WTC11 (cell line): ENCODE measurements at regions of chr18 and their contacts with region 1.

Region 1: DNA sequence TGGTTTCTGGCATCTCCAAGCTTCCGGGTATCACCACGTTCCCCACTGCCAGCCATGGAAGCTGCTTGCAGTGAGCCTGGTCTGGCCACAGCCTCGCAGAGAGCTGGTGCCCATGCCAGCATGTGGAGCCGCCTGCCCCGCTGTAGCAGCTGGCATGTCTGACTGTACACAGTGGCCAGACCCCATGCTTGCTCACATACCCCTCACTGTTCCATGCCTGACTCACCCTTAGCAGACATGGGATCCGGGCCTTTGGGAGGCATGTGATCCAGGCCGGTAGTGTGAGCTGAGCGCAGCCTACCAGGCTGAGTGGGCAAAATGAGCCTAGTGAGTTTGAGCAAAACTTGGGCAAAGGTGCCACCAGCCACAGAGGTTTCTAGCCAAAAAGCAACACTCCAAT is 18.8 kb upstream of the RPRD1A start:
- DNase-seq: no peak
- ATAC-seq: no peak
- H3K4me3 Mint-ChIP-seq: no peak overlapping the region
- H3K27ac Mint-ChIP-seq: no peak overlapping the region
- H3K4me1 Mint-ChIP-seq: no peaks in the 10 kb centered on the region
- H3K27me3 Mint-ChIP-seq: no peaks in the 10 kb centered on the region
- CTCF ChIP-seq: no peak

Region 2: GRCh38 chr18:35311476-35311875 is 774.7 kb before region 1 on chr18:
- CTCF ChIA-PET with region 1: no interaction called
- POLR2A ChIA-PET with region 1: no interaction called
- DNase-seq: no peak
- ATAC-seq: no peak
- H3K4me3 Mint-ChIP-seq: no peak overlapping the region
- H3K27ac Mint-ChIP-seq: no peak overlapping the region
- H3K4me1 Mint-ChIP-seq: no peaks in the 10 kb centered on the region
- H3K27me3 Mint-ChIP-seq: peaks cover 12% of the 10 kb centered on the region
- CTCF ChIP-seq: no peak

Region 3: GRCh38 chr18:35939138-35939537 is 147.0 kb before region 1 on chr18:
- CTCF ChIA-PET with region 1: no interaction called
- POLR2A ChIA-PET with region 1: no interaction called
- DNase-seq: peak; percentile 44
- ATAC-seq: peak; percentile 97
- H3K4me3 Mint-ChIP-seq: no peak overlapping the region
- H3K27ac Mint-ChIP-seq: peak overlapping the region; percentile 19; the same call in 1 of the 2 replicates
- H3K4me1 Mint-ChIP-seq: peaks cover 27% of the 10 kb centered on the region
- H3K27me3 Mint-ChIP-seq: no peaks in the 10 kb centered on the region
- CTCF ChIP-seq: peak; percentile 33; the same call in 1 of the 2 replicates

Region 4: DNA sequence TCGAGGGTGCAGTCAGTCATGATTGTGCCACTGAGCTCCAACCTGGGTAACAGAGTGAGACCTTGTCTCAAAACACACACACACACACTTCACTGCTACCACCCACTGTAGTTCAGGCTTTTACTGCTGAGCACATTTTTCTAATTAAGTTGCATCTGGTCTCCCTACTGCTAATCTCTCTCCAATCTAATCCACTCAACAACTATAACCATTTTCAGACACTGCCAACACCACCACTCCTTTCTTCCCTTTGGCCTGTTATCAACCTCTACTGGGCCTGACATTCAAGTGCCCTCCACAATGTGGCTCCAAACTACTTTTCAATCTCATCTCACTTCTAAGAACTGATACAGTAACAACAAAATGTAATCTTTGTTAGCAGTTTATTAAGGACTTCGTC is 69.0 kb before region 1 on chr18:
- CTCF ChIA-PET with region 1: interaction called, 10 read pairs
- POLR2A ChIA-PET with region 1: no interaction called
- DNase-seq: no peak
- ATAC-seq: peak; percentile 12
- H3K4me3 Mint-ChIP-seq: no peak overlapping the region
- H3K27ac Mint-ChIP-seq: peak overlapping the region; percentile 93
- H3K4me1 Mint-ChIP-seq: peaks cover 7% of the 10 kb centered on the region
- H3K27me3 Mint-ChIP-seq: no peaks in the 10 kb centered on the region
- CTCF ChIP-seq: no peak

Region 5: GRCh38 chr18:36107477-36107876 is 21.3 kb after region 1 on chr18:
- CTCF ChIA-PET with region 1: no interaction called
- POLR2A ChIA-PET with region 1: no interaction called
- DNase-seq: no peak
- ATAC-seq: no peak
- H3K4me3 Mint-ChIP-seq: no peak overlapping the region
- H3K27ac Mint-ChIP-seq: no peak overlapping the region
- H3K4me1 Mint-ChIP-seq: no peaks in the 10 kb centered on the region
- H3K27me3 Mint-ChIP-seq: no peaks in the 10 kb centered on the region; the same call in 1 of the 2 replicates
- CTCF ChIP-seq: no peak